Aorta (tissue), 5 donors: ENCODE measurements at regions of chr11 and their contacts with region 1.

Region 1: DNA sequence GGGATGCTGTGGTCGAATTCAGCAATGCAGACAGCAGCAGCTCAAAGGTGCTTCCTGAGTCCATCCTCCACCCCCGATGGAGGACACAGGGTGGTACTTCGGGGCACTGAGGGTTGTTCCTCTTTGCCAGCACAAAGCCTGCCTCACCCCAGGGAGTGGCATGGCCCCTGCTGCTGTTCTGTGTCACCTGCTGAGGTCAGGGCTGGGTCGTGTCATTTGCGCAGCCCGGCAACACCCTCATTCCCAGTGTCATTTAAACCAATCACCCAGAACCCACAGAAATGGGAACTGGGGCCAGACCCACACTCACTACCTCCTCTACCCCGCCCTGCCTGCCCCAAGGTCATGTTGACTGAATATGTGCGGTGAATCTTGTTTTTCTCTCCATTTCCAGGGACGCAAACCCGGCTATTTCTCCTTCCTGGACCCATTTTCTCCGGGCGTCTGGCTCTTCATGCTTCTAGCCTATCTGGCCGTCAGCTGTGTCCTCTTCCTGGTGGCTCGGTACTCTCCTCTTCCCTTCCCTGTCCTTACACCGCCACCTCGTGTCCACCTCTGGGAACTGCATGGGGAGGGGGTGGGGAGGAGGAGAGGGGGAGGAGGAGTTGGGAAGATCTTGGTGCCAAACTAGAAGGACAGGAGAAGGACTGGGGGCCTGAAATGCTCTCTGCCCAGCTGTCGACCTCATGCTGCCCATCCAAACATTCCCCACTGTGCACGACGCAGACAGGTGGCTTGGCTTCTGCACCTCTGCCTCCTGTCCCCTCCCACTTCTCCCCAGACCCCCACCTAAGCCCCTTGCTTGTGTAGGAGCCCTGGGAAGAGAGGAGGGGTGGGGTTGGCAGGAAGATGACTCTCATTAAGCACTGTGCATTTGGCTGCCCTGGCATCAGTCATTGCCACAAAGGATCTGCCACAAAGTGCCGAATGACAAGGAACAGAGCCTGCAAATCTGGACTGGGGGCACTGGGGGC is 71.2 kb upstream of the TBCEL start:
- DNase-seq: peak; percentile 78 to 89
- ATAC-seq: peak; percentile 83
- H3K4me3 ChIP-seq: no peak overlapping the region
- H3K27ac ChIP-seq: no peak overlapping the region
- H3K4me1 ChIP-seq: no peaks in the 10 kb centered on the region
- H3K27me3 ChIP-seq: peaks cover 0 to 1% of the 10 kb centered on the region in 2 donors

Region 2: GRCh38 chr11:120248551-120249278 is 704.0 kb before region 1 on chr11:
- intact Hi-C with region 1: loop called in 1 of 2 experiments (anchors 10 kb)
- DNase-seq: no peak
- ATAC-seq: no peak
- H3K4me3 ChIP-seq: no peak overlapping the region
- H3K27ac ChIP-seq: no peak overlapping the region
- H3K4me1 ChIP-seq: no peaks in the 10 kb centered on the region
- H3K27me3 ChIP-seq: no peaks in the 10 kb centered on the region

Region 3: GRCh38 chr11:120682866-120683265 is 269.9 kb before region 1 on chr11:
- intact Hi-C with region 1: loop called (anchors 5 to 10 kb)
- DNase-seq: no peak
- ATAC-seq: no peak
- H3K4me3 ChIP-seq: no peak overlapping the region
- H3K27ac ChIP-seq: no peak overlapping the region
- H3K4me1 ChIP-seq: no peaks in the 10 kb centered on the region
- H3K27me3 ChIP-seq: no peaks in the 10 kb centered on the region